ENCODE measurements at regions of chr12 and their contacts with region 1.

Region 1: GRCh38 chr12:389139-390096 is at the start of gene KDM5A:
- DNase-seq: peak; percentile 82 to 97 (median 92)
- ATAC-seq: peak; percentile 88
- H3K4me3 Mint-ChIP-seq: peak within 1 kb of the TSS; percentile 96 to 100 (median 99)
- H3K27ac Mint-ChIP-seq: peak within 1 kb of the TSS; percentile 98 to 100 (median 99)
- H3K4me1 Mint-ChIP-seq: peaks cover 19 to 53% (median 38%) of the 10 kb centered on the region in 4 donors
- H3K27me3 Mint-ChIP-seq: peaks cover 0 to 3% (median 0%) of the 10 kb centered on the region in 5 donors
- polyA plus RNA-seq, gene KDM5A: 43.6 to 60.1 (median 50.8) TPM

Region 2: DNA sequence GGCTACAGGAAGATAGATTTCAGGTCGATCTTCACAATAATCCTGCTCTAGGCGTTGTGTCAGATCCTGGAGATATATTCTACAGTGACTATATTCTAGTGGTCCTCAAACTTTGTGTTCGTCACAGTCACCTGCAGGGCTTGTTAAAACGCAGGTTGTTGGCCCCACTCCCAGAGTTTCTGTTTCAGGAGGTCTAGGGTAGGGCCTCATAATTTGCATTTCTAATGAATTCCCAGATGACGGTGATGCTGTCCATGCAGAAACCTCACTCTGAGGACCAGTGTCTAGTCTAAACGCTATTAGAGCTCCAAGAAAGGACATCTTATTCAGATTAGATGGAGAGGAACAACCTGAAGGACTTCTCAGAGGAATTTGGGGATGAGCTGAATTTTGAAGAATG is 113.6 kb before region 1 on chr12:
- POLR2A ChIA-PET with region 1: no interaction called
- DNase-seq: no peak
- ATAC-seq: no peak
- H3K4me3 Mint-ChIP-seq: no peak overlapping the region
- H3K27ac Mint-ChIP-seq: no peak overlapping the region
- H3K4me1 Mint-ChIP-seq: peaks cover 0 to 15% (median 5%) of the 10 kb centered on the region in 4 donors
- H3K27me3 Mint-ChIP-seq: no peaks in the 10 kb centered on the region

Region 3: GRCh38 chr12:292186-292585 is 97.2 kb before region 1 on chr12:
- POLR2A ChIA-PET with region 1: interaction called, 10 read pairs
- DNase-seq: no peak
- ATAC-seq: no peak
- H3K4me3 Mint-ChIP-seq: no peak overlapping the region
- H3K27ac Mint-ChIP-seq: peak overlapping the region in 3 of 10 donors; percentile 3 to 29 (median 21)
- H3K4me1 Mint-ChIP-seq: peaks cover 20 to 28% (median 21%) of the 10 kb centered on the region in 4 donors
- H3K27me3 Mint-ChIP-seq: no peaks in the 10 kb centered on the region

Region 4: DNA sequence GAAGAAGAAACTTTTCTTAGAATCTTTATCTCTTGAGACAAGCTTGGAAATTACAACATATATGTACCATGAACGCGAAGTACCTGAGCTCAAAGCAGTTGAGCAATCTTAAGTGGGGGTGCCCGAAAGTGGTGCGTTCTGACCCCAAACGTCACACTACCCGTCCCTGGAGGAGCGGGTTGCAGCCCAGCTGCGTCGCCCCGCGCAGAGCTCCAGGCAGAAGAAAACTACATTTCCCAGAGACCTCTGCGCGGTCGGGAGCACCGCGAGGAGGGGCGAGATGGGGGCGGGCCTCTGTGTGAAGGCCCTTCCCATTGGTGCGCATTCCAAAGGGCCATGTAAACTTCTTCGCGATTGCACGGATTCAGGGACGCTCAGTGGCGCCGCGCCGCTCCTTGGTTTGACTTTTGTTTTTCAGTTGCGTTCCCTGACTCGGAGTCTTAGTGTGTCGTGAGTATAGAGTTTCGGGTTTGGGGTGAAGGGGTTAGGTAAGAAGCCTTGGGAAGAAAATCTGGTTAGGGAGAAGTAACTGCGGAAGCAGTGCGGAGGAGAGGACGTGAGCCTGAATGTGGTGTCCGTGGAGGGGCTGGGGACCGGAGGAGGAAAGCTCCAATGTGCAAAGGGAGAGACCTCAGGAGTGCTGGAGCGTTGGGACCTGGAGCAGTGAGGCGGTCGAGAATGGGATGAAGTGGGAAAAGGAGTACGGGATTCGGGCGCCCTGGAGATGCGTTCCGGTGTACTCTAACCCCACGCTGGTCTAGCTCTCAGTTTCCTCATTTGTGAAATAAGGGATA is 12.0 kb after region 1 on chr12 and contains the start of gene CCDC77:
- POLR2A ChIA-PET with region 1: interaction called, 71 read pairs
- DNase-seq: peak; percentile 83 to 98 (median 94)
- ATAC-seq: peak; percentile 99 to 100
- H3K4me3 Mint-ChIP-seq: no peak within 1 kb of the TSS
- H3K27ac Mint-ChIP-seq: peak within 1 kb of the TSS in 1 of 10 donors; percentile 24
- H3K4me1 Mint-ChIP-seq: peaks cover 0 to 5% (median 0%) of the 10 kb centered on the region in 4 donors
- H3K27me3 Mint-ChIP-seq: no peaks in the 10 kb centered on the region
- polyA plus RNA-seq, gene CCDC77: 3.4 to 6.6 (median 4.8) TPM

Region 5: GRCh38 chr12:563250-563781 is 173.9 kb after region 1 on chr12:
- POLR2A ChIA-PET with region 1: interaction called, 13 read pairs
- DNase-seq: peak in 9 of 10 donors; percentile 42 to 86 (median 65)
- ATAC-seq: peak; percentile 89 to 90
- H3K4me3 Mint-ChIP-seq: peak overlapping the region; percentile 75 to 95 (median 84)
- H3K27ac Mint-ChIP-seq: peak overlapping the region; percentile 94 to 99 (median 96)
- H3K4me1 Mint-ChIP-seq: peaks cover 48 to 94% (median 82%) of the 10 kb centered on the region in 4 donors
- H3K27me3 Mint-ChIP-seq: no peaks in the 10 kb centered on the region